Activated T-helper 1 cell treated with anti-CD3 and anti-CD28 coated beads, Interleukin-12 subunit alpha, Interleukin-12 subunit beta, Interleukin-2, Interleukin-4 antibody, amounts not matched to agents 30 ng/mL and 10 ng/mL and 1 ng/mL, durations not matched to agents 14 hours and 24 hours and 36 hours (primary cell): ENCODE measurements at regions of chr2 and their contacts with region 1.

Region 1: GRCh38 chr2:172806493-172806892 is 70.8 kb downstream of the RAPGEF4 start:
- DNase-seq: no peak
- H3K4me3 Mint-ChIP-seq: no peak overlapping the region
- H3K27ac Mint-ChIP-seq: no peak overlapping the region
- H3K4me1 Mint-ChIP-seq: no peaks in the 10 kb centered on the region
- H3K27me3 Mint-ChIP-seq: peaks cover 12% of the 10 kb centered on the region

Region 2: GRCh38 chr2:172864182-172864581 is 57.7 kb after region 1 on chr2:
- intact Hi-C with region 1: loop called (anchors 5 kb)
- DNase-seq: no peak
- H3K4me3 Mint-ChIP-seq: no peak overlapping the region
- H3K27ac Mint-ChIP-seq: no peak overlapping the region
- H3K4me1 Mint-ChIP-seq: no peaks in the 10 kb centered on the region
- H3K27me3 Mint-ChIP-seq: peaks cover 13% of the 10 kb centered on the region

Region 3: GRCh38 chr2:172931918-172932520 is 125.5 kb after region 1 on chr2:
- intact Hi-C with region 1: loop called (anchors 1 kb)
- DNase-seq: peak; percentile 26
- H3K4me3 Mint-ChIP-seq: no peak overlapping the region
- H3K27ac Mint-ChIP-seq: no peak overlapping the region
- H3K4me1 Mint-ChIP-seq: peaks cover 5% of the 10 kb centered on the region
- H3K27me3 Mint-ChIP-seq: no peaks in the 10 kb centered on the region

Region 4: GRCh38 chr2:173027181-173028128 is 221.0 kb after region 1 on chr2:
- intact Hi-C with region 1: loop called (anchors 1 kb)
- DNase-seq: peak; percentile 57
- H3K4me3 Mint-ChIP-seq: no peak overlapping the region
- H3K27ac Mint-ChIP-seq: no peak overlapping the region
- H3K4me1 Mint-ChIP-seq: no peaks in the 10 kb centered on the region
- H3K27me3 Mint-ChIP-seq: peaks cover 11% of the 10 kb centered on the region